ENCODE measurements at regions of chr6 and their contacts with region 1.

Region 1: GRCh38 chr6:85632164-85632942 is 10.3 kb downstream of the SYNCRIP start:
- DNase-seq: no peak
- ATAC-seq: no peak
- H3K4me3 ChIP-seq: no peak overlapping the region
- H3K27ac ChIP-seq: no peak overlapping the region
- H3K4me1 ChIP-seq: no peaks in the 10 kb centered on the region
- H3K27me3 ChIP-seq: no peaks in the 10 kb centered on the region
- CTCF ChIP-seq: no peak
- EP300 ChIP-seq: no peak
- POLR2A ChIP-seq: no peak
- RAD21 ChIP-seq: no peak

Region 2: DNA sequence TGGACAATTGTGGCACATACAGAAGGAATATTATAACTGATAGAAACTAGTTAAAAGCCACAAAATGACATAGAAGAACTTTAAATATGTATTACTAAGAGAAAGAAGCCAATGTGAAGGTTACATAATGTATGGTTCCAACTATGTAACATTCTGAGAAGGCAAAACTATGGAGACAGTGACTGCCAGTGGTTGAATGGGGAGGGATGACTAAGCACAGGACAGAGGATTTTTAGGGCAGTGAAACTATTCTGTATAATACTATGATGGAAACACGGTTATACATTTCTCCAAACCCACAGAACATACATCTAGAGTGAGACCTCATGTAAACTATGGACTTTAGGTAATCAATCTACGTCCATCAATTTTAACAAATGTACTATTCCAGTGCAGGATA is 12.0 kb before region 1 on chr6:
- CTCF ChIA-PET with region 1: no interaction called
- POLR2A ChIA-PET with region 1: no interaction called
- RAD21 ChIA-PET with region 1: no interaction called
- SMC1A ChIA-PET with region 1: no interaction called
- in situ Hi-C with region 1: no loop called
- intact Hi-C with region 1: loop called (anchors 2 kb)
- DNase-seq: no peak
- ATAC-seq: no peak; the same call in 1 of the 3 replicates
- H3K4me3 ChIP-seq: no peak overlapping the region
- H3K27ac ChIP-seq: no peak overlapping the region
- H3K4me1 ChIP-seq: no peaks in the 10 kb centered on the region
- H3K27me3 ChIP-seq: no peaks in the 10 kb centered on the region
- CTCF ChIP-seq: no peak
- EP300 ChIP-seq: no peak
- POLR2A ChIP-seq: no peak
- RAD21 ChIP-seq: no peak

Measured in GM12878 (cell line).